Dorsolateral prefrontal cortex (tissue), 120 donors: ENCODE measurements at regions of chr2 and their contacts with region 1.

Region 1: GRCh38 chr2:3558205-3559014 is at the start of gene RNASEH1:
- DNase-seq: peak; percentile 93 to 99 (median 98)
- H3K4me3 ChIP-seq: peak within 1 kb of the TSS; percentile 69 to 100 (median 97)
- H3K27ac ChIP-seq: peak within 1 kb of the TSS; percentile 40 to 96 (median 89)
- H3K27me3 ChIP-seq: no peaks in the 10 kb centered on the region
- CTCF ChIP-seq: peak in 36 of 56 donors; percentile 6 to 61 (median 24)
- total RNA-seq, gene RNASEH1: 11.4 to 33.7 (median 23.1) TPM

Region 2: DNA sequence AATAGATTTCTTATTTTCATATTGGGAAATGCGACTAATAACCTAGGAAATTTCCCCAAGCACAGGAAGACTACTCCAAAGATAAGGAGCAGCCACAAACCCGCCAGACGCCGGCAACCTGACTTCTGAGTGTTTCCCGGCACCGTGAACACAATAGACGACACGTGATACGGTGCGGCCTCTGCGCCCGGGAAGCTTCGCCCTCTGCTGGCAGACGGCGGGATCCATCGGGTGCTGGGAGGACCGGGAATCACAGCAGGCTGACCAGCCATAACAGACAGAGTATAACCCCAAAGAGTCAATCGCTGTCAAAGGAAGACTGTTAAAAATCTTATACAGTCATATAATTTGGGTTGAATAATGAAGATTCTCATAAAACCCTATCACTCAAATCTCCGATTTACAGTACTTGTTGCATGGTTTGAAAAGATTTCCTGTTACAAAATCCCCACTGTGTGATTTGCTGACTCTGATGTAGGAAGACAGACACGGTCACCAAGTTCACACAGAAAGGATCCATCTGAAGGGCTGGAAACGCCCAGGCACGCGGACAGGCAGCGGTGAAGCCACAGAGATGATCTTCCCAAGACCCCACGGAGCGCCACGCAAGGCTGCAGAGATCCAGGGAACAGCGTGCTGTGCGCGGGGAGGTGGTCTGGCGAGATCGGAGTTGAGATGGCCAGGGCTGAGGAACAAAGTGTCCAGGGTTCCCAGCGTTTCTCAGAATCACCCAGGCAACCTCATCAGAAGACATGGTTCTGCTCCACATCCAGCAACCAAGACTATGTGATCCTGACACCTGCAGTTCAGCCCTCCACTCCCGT is 254.6 kb before region 1 on chr2:
- intact Hi-C with region 1: loop called in 1 of 2 experiments (anchors 10 kb)
- DNase-seq: peak; percentile 83 to 94 (median 91)
- H3K4me3 ChIP-seq: peak overlapping the region in 58 of 59 donors; percentile 30 to 66 (median 52)
- H3K27ac ChIP-seq: peak overlapping the region in 35 of 59 donors; percentile 5 to 84 (median 53)
- H3K27me3 ChIP-seq: no peaks in the 10 kb centered on the region
- CTCF ChIP-seq: peak; percentile 97 to 100 (median 99)

Region 3: GRCh38 chr2:3379647-3380534 is 178.5 kb before region 1 on chr2 and contains the start of gene TRAPPC12:
- intact Hi-C with region 1: loop called (anchors 5 kb)
- DNase-seq: peak; percentile 88 to 95 (median 92)
- H3K4me3 ChIP-seq: peak within 1 kb of the TSS; percentile 65 to 99 (median 94)
- H3K27ac ChIP-seq: peak within 1 kb of the TSS; percentile 27 to 99 (median 95)
- H3K27me3 ChIP-seq: no peaks in the 10 kb centered on the region
- CTCF ChIP-seq: peak in 53 of 56 donors; percentile 27 to 76 (median 58)
- total RNA-seq, gene TRAPPC12: 132 to 231 (median 178) TPM

Region 4: DNA sequence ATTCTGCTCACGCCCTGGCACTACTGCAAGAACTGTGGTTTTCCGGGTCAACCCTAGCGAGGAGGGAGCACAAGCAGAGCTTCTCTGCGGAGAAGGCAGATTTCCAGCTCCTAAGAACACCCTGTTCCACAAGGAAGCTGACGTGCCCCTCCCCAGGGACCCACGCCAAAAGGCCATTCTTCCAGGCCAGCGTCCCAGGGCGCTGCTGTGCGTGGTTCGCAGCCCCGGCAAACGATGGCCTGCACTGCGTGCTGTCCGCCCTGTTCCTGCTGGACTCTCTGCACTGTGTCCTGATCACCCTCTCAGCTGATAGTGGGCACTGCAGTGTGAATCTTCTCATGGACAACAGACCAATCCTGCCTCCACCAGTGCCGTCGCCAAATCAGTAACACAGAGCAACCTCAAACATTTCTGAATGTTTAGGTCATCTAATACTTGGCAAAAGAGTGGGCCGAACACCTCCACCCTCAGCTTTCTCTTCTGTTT is 88.2 kb before region 1 on chr2:
- intact Hi-C with region 1: loop called in 1 of 2 experiments (anchors 5 kb)
- DNase-seq: peak in 3 of 10 donors; percentile 30 to 62 (median 42)
- H3K4me3 ChIP-seq: no peak overlapping the region
- H3K27ac ChIP-seq: peak overlapping the region in 49 of 59 donors; percentile 0 to 78 (median 57)
- H3K27me3 ChIP-seq: no peaks in the 10 kb centered on the region
- CTCF ChIP-seq: no peak

Region 5: GRCh38 chr2:3518496-3519254 is 39.7 kb before region 1 on chr2:
- intact Hi-C with region 1: loop called (anchors 1 to 2 kb)
- DNase-seq: peak; percentile 82 to 96 (median 93)
- H3K4me3 ChIP-seq: peak overlapping the region; percentile 71 to 100 (median 92)
- H3K27ac ChIP-seq: peak overlapping the region; percentile 92 to 100 (median 99)
- H3K27me3 ChIP-seq: no peaks in the 10 kb centered on the region
- CTCF ChIP-seq: peak in 6 of 56 donors; percentile 6 to 43 (median 18)

Region 6: DNA sequence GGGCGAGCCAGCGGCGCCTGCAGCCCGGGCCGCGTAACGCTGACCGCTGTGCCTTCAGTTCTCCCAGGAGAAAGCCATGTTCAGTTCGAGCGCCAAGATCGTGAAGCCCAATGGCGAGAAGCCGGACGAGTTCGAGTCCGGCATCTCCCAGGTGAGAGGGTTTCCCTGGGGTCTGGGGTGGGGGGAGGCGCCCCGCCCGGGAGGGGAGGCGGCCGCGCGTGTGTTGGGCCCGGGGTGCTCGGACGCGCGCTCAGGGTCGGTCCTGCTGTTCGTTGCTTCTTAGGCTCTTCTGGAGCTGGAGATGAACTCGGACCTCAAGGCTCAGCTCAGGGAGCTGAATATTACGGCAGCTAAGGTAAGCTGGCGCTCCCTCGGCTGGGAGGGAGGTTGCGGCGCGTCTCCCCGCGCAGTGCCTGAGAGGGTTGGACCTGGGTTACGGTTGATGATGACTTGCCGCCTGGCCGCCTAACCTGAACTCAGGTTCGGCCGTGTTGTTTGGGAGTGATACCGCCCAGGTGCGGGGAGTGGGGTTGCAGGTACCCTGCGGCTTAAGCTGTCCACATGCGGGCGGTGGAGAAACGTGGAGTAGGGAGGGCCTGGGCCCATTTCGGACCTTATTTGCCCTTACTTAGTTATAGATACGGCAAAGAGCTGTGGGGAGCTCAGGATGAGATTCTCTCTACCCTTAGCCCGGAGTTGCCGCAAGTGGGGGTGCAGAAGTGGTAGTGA is 17.3 kb after region 1 on chr2:
- intact Hi-C with region 1: loop called (anchors 1 kb)
- DNase-seq: no peak
- H3K4me3 ChIP-seq: peak overlapping the region; percentile 63 to 96 (median 84)
- H3K27ac ChIP-seq: peak overlapping the region; percentile 41 to 96 (median 86)
- H3K27me3 ChIP-seq: no peaks in the 10 kb centered on the region
- CTCF ChIP-seq: peak in 1 of 56 donors; percentile 0

Region 7: GRCh38 chr2:3651691-3652648 is 93.6 kb after region 1 on chr2:
- intact Hi-C with region 1: loop called in 1 of 2 experiments (anchors 5 kb)
- DNase-seq: peak; percentile 39 to 88 (median 82)
- H3K4me3 ChIP-seq: peak overlapping the region; percentile 28 to 71 (median 53)
- H3K27ac ChIP-seq: peak overlapping the region; percentile 15 to 95 (median 86)
- H3K27me3 ChIP-seq: no peaks in the 10 kb centered on the region
- CTCF ChIP-seq: peak in 3 of 56 donors; percentile 8 to 18 (median 16)

Region 8: GRCh38 chr2:4214444-4215200 is 656.2 kb after region 1 on chr2:
- intact Hi-C with region 1: no loop called
- DNase-seq: no peak
- H3K4me3 ChIP-seq: no peak overlapping the region
- H3K27ac ChIP-seq: no peak overlapping the region
- H3K27me3 ChIP-seq: peaks cover 0 to 14% (median 0%) of the 10 kb centered on the region in 45 donors
- CTCF ChIP-seq: no peak